MCF 10A (cell line): ENCODE measurements at regions of chr22 and their contacts with region 1.

Region 1: GRCh38 chr22:19122143-19122751 is at the start of gene DGCR2:
- DNase-seq: peak; percentile 97
- H3K4me3 Mint-ChIP-seq: peak within 1 kb of the TSS; percentile 85
- H3K27ac Mint-ChIP-seq: peak within 1 kb of the TSS; percentile 86
- H3K4me1 Mint-ChIP-seq: peaks cover 17% of the 10 kb centered on the region
- H3K27me3 Mint-ChIP-seq: no peaks in the 10 kb centered on the region
- CTCF ChIP-seq: no peak
- total RNA-seq, gene DGCR2: 41.2 and 50.1 TPM in 2 replicates

Region 2: DNA sequence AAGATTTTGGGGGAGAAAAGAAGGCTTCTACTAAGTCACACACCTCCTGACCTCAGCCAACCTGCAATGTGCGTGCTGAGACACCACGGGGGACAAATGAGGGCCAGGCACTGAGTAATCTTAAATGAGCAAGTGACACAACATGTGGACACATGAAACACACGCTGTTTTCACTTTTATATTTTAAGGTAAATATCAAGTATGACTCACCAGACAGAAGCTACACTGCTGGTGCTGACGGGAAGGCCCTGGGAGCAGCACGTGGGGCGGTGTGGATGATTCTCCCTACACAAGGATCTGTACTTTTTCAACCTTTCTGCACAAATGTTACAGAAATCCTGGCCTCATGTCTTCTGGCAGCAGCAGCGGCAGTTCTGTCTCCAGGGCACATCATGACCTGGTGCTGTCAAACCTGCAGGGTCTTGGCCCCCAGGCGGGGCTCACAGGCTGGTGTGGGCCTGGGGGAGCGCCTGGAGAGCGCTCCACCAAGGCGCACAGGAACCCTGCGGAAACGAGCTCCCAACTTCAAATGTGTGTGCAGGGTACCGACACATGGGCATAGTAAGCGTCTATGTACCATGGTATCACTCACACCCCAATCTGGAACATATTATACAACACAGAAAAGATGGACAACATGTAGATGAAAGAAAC is 61.8 kb before region 1 on chr22:
- CTCF ChIA-PET with region 1: no interaction called
- POLR2A ChIA-PET with region 1: interaction called, 4 read pairs
- intact Hi-C with region 1: loop called (anchors 2 kb)
- DNase-seq: peak; percentile 65
- H3K4me3 Mint-ChIP-seq: no peak overlapping the region
- H3K27ac Mint-ChIP-seq: no peak overlapping the region
- H3K4me1 Mint-ChIP-seq: peaks cover 6% of the 10 kb centered on the region
- H3K27me3 Mint-ChIP-seq: no peaks in the 10 kb centered on the region
- CTCF ChIP-seq: no peak

Region 3: DNA sequence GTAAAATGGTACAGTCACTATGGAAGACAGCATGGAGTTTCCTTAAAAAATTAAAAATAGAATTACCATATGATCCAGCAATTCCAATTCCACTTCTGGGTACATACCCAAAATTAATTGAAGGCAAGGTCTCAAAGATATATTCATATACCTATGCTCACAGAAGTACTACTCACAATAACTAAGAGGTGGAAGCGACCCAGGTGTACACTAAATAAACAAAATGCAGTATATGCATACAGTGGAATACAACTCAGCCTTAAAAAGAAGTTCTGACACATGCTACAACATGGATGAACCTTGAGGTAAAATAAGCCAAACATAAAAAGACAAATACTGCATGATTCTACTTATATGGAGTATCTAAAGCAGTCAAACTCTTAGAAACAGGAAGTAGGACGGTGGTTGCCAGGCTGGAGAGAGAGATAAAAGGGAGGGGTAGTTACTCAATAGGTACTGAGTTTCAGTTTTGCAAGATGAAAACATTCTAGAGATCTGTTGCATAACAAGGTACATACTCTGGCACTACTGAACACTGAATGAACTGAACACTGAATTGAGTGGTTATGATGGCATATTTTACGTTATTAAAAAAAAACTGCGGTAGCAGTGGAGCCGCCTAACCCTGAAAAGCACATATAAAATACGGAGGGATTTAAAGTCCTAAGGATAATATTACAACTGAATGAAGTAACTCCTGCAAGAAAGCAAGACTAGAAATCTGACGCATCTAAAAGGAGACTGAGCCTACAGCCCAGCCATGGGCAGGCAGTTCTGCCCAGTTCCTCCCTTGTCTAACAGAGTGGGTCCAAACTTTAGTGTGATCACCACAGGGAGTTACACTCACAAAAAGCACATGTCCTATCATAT is 12.8 kb before region 1 on chr22:
- CTCF ChIA-PET with region 1: interaction called, 9 read pairs
- POLR2A ChIA-PET with region 1: interaction called, 43 read pairs
- intact Hi-C with region 1: no loop called
- DNase-seq: peak; percentile 89
- H3K4me3 Mint-ChIP-seq: peak overlapping the region; percentile 49
- H3K27ac Mint-ChIP-seq: peak overlapping the region; percentile 94
- H3K4me1 Mint-ChIP-seq: peaks cover 34% of the 10 kb centered on the region
- H3K27me3 Mint-ChIP-seq: no peaks in the 10 kb centered on the region
- CTCF ChIP-seq: no peak

Region 4: GRCh38 chr22:19143967-19144400 is 21.7 kb after region 1 on chr22:
- CTCF ChIA-PET with region 1: interaction called, 4 read pairs
- POLR2A ChIA-PET with region 1: interaction called, 30 read pairs
- intact Hi-C with region 1: no loop called
- DNase-seq: no peak
- H3K4me3 Mint-ChIP-seq: peak overlapping the region; percentile 100
- H3K27ac Mint-ChIP-seq: peak overlapping the region; percentile 99
- H3K4me1 Mint-ChIP-seq: peaks cover 11% of the 10 kb centered on the region
- H3K27me3 Mint-ChIP-seq: no peaks in the 10 kb centered on the region
- CTCF ChIP-seq: no peak

Region 5: DNA sequence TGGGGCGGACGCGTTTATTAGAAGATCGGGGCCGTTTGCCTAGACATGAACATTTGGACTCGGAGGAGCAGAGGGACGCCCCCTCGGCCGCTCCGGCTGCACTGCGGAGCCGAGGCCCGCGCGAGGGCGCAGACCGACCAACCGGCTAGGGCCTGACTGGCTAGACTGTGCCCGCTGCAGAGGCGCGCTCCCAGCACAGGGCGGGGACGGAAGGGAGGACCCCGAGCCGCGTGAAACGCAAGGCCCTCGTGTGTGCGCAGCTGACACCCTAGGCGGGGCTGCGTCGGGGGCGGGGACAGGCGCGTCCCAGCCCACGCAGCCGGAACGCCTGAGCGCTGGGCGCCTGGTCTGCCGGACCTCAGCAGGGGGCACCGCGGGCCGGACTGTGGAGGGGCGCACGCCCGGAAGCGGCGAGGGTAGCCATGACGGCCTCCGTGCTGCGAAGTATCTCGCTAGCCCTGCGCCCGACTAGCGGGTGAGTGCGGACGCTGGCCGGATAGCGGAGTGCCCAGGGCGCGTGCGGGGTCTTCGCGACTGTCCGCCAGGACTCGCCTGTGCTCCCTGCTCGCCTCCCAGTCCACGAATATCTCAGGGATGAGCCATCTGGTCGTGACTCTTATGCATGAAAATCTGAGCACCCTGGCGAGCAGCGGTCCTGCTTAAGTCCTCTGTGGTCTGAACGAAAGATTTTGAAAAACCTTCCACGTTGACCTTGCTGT is 310.0 kb after region 1 on chr22 and contains the start of gene MRPL40:
- CTCF ChIA-PET with region 1: no interaction called
- POLR2A ChIA-PET with region 1: interaction called, 12 read pairs
- intact Hi-C with region 1: no loop called
- DNase-seq: peak; percentile 94
- H3K4me3 Mint-ChIP-seq: peak within 1 kb of the TSS; percentile 86
- H3K27ac Mint-ChIP-seq: peak within 1 kb of the TSS; percentile 91
- H3K4me1 Mint-ChIP-seq: peaks cover 11% of the 10 kb centered on the region
- H3K27me3 Mint-ChIP-seq: no peaks in the 10 kb centered on the region
- CTCF ChIP-seq: no peak
- total RNA-seq, gene MRPL40: 51.9 and 66.7 TPM in 2 replicates